ENCODE measurements at regions of chr2 and their contacts with region 1.

Region 1: DNA sequence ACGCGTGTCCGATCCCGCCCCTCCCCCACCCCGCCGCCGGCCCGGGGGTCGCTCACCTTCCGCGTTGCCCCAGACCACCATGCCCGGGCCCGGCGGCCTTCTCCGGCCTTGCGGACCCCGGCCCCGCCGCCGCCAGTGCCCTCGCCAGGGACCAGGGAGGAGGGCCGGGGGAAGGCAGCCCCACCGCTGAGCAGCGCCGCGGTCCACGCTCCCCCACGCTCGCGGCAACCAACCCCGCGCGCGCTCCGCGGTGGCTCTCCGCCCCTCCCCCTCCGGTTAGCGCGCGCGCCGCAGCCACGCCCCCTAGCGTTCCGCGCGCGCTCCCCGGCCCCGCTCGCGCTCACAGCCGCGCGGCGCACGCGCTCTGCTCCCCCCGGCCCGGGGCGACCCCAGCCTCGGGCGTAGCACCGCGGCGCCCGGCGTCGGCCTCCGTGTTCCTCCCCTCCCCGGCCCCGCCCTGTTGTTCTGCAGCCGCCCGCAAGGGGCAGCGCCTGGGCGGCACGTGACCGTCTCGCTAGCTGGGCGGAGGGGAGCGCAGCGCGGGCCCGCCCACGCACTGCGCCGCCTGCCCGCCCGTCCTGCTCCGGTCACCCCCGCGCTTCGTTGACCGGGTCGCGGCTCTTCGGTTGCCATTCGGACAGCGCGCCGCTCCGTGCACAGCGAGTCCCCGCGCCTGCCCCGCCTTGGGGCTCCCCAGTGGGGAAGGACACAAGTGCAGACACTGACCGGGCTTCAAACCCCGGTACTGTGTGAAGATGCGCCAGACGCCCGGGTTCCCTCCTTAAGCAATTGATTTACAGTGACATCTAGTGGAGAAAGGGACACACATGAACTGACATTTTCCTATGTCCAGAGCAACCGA is at the start of gene REV1:
- DNase-seq: peak; percentile 81 to 86
- ATAC-seq: peak; percentile 91 to 92
- H3K4me3 ChIP-seq: peak within 1 kb of the TSS; percentile 74 to 97 (median 88)
- H3K27ac ChIP-seq: peak within 1 kb of the TSS; percentile 93 to 99 (median 94)
- H3K4me1 ChIP-seq: peaks cover 21 to 25% of the 10 kb centered on the region in 2 donors
- H3K27me3 ChIP-seq: no peaks in the 10 kb centered on the region
- CTCF ChIP-seq: peak; percentile 85 to 96 (median 94)
- POLR2A ChIP-seq: peak; percentile 65 to 75
- total RNA-seq, gene REV1: 13.5 to 35.1 (median 17.8) TPM

Region 2: GRCh38 chr2:98608116-98608999 is 881.6 kb before region 1 on chr2 and contains the starts of genes COA5 and UNC50:
- in situ Hi-C with region 1: no loop called
- intact Hi-C with region 1: loop called (anchors 5 kb)
- DNase-seq: peak; percentile 79 to 85
- ATAC-seq: peak; percentile 90
- H3K4me3 ChIP-seq: peak within 1 kb of the TSS; percentile 70 to 90 (median 86)
- H3K27ac ChIP-seq: peak within 1 kb of the TSS; percentile 91 to 97 (median 94)
- H3K4me1 ChIP-seq: peaks cover 53 to 59% of the 10 kb centered on the region in 2 donors
- H3K27me3 ChIP-seq: no peaks in the 10 kb centered on the region
- CTCF ChIP-seq: no peak
- POLR2A ChIP-seq: peak; percentile 79 to 89
- total RNA-seq, gene COA5: 26.1 to 45.1 (median 31.0) TPM
- total RNA-seq, gene UNC50: 30.3 to 43.1 (median 30.5) TPM

Region 3: GRCh38 chr2:99141110-99142108 is 348.6 kb before region 1 on chr2 and contains the start of gene C2orf15:
- in situ Hi-C with region 1: no loop called
- intact Hi-C with region 1: loop called (anchors 2 kb)
- DNase-seq: peak; percentile 82 to 86
- ATAC-seq: peak; percentile 96 to 97
- H3K4me3 ChIP-seq: peak within 1 kb of the TSS; percentile 80 to 98 (median 88)
- H3K27ac ChIP-seq: peak within 1 kb of the TSS; percentile 78 to 81 (median 79)
- H3K4me1 ChIP-seq: peaks cover 4 to 11% of the 10 kb centered on the region in 2 donors
- H3K27me3 ChIP-seq: no peaks in the 10 kb centered on the region
- CTCF ChIP-seq: no peak
- POLR2A ChIP-seq: peak; percentile 10 to 73
- total RNA-seq, gene C2orf15: not detected

Region 4: GRCh38 chr2:99337113-99338028 is 152.6 kb before region 1 on chr2 and contains the start of gene EIF5B:
- in situ Hi-C with region 1: loop called in 3 of 4 experiments (anchors 10 to 25 kb)
- intact Hi-C with region 1: loop called (anchors 1 kb)
- DNase-seq: peak; percentile 95 to 96
- ATAC-seq: peak; percentile 77 to 81
- H3K4me3 ChIP-seq: peak within 1 kb of the TSS; percentile 87 to 98 (median 92)
- H3K27ac ChIP-seq: peak within 1 kb of the TSS; percentile 94 to 98 (median 97)
- H3K4me1 ChIP-seq: peaks cover 35 to 38% of the 10 kb centered on the region in 2 donors
- H3K27me3 ChIP-seq: no peaks in the 10 kb centered on the region
- CTCF ChIP-seq: peak in 4 of 5 experiments; percentile 38 to 69 (median 54)
- POLR2A ChIP-seq: peak; percentile 82 to 85
- total RNA-seq, gene EIF5B: 33.0 to 71.3 (median 50.7) TPM

Region 5: DNA sequence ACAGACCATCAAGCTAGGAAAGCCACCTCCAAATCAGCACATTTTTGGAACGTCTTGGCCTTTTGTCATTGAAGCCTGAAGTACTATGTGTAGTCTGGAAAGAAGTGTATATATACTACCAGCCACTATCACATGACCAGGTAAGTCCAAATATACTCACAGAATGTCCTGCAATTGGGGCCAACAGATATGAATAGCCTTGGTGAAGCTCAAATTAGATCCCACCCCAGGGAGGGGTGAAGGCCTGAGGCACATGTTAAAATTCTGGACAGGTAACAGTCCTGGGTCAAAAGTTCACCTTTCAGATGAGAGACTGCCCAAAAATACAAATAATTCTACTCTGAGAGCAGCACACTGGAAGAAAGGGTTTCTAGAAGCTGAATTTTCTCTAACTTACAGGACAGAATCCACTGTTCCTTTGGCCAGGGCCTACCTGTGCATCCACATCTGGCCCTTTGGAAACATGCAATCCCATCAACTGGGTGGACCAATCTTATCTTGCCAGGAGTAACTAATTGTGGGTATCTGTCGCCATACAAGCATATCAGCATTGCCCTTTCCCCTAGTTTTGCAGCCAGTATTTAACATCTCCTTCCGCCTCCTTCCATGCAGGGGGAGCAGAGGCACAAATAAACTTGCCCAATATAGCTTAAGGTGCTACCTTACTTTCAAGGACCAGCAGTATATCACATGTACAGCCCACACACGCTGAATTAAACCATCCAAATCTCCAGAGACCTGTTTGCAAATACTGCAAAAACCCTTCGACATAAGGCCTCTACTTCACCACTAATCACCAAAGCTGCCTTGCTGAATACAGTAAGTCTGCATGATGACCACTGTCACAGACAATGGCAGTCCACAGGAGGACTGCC is 85.0 kb before region 1 on chr2:
- in situ Hi-C with region 1: no loop called
- intact Hi-C with region 1: loop called (anchors 5 kb)
- DNase-seq: peak; percentile 16 to 23
- ATAC-seq: peak; percentile 93 to 94
- H3K4me3 ChIP-seq: no peak overlapping the region
- H3K27ac ChIP-seq: peak overlapping the region; percentile 71 to 81 (median 80)
- H3K4me1 ChIP-seq: peaks cover 23 to 24% of the 10 kb centered on the region in 2 donors
- H3K27me3 ChIP-seq: no peaks in the 10 kb centered on the region
- CTCF ChIP-seq: no peak
- POLR2A ChIP-seq: no peak

Region 6: GRCh38 chr2:99545066-99545465 is 55.1 kb after region 1 on chr2:
- in situ Hi-C with region 1: no loop called
- intact Hi-C with region 1: no loop called
- DNase-seq: no peak
- ATAC-seq: no peak
- H3K4me3 ChIP-seq: no peak overlapping the region
- H3K27ac ChIP-seq: no peak overlapping the region
- H3K4me1 ChIP-seq: no peaks in the 10 kb centered on the region
- H3K27me3 ChIP-seq: peaks cover 0 to 7% (median 0%) of the 10 kb centered on the region in 3 donors
- CTCF ChIP-seq: no peak
- POLR2A ChIP-seq: no peak

Measured in gastrocnemius medialis (tissue), 4 donors.